Natural killer cell (primary cell): ENCODE measurements at regions of chr3 and their contacts with region 1.

Region 1: DNA sequence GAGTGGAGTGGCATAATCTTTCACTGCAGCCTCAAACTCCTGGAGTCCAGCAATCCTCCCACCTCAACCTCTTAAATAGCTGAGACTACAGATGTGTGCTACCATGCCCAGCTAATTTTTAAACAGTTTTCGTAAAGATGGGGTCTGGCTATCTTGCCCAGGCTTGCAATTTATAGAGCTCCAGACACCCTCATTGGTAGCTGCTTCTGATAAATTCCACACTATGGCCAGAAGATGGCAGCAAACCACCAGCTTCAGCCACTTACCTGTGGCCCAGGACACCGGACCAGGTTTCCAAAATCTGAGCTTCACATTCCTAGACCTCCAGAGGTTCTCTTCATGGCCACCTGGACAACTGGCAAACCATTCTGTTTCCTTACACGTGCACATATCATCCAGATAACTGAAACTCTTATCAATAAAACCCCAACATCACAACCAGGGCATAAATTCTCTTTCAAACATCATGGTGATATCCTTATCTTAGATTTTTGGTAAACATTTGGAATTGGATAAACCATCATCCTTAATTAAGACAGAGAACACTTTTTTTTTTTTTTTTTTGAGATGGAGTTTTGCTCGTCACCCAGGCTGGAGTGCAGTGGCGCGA is 28.9 kb downstream of the FBXW12 start:
- DNase-seq: peak; percentile 53 to 91
- ATAC-seq: peak; percentile 74 to 94 (median 93)
- H3K4me3 ChIP-seq: no peak overlapping the region
- H3K4me3 Mint-ChIP-seq: no peak overlapping the region
- H3K27ac ChIP-seq: no peak overlapping the region
- H3K27ac Mint-ChIP-seq: no peak overlapping the region
- H3K4me1 ChIP-seq: no peaks in the 10 kb centered on the region
- H3K4me1 Mint-ChIP-seq: no peaks in the 10 kb centered on the region
- H3K27me3 ChIP-seq: no peaks in the 10 kb centered on the region
- H3K27me3 Mint-ChIP-seq: peaks cover 5 to 6% of the 10 kb centered on the region in 2 donors
- CTCF ChIP-seq: peak; percentile 89

Region 2: DNA sequence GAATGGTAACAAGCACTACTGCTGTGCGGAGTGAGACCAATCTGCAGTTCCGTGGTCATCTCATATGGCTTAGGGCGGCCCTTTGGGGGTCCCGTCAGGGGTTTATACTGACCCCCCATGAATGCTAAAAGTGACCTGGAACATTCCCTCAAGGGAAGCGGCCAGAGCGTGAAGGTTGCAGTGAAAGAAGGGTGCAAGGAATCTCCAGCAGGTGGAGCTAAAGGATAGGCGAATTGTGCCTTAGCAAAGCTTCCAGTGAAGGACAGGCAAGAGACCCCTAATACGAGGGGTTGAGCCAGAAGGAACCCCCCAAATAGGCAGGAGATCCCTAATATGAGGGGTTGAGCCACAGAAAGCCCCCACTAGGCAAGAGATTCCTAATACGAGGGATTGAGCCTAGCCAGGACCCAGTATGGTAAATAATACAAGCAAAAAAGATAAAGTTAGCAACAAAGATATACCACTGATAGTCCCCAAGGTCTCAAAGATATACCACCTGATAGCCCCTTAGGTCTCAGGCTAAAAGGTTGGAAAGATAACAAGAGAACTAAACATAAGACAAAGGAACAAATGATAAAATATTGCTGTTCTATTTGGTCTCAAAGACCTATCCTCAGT is 127.2 kb before region 1 on chr3:
- intact Hi-C with region 1: loop called (anchors 1 kb)
- DNase-seq: peak; percentile 30 to 82
- ATAC-seq: peak; percentile 68 to 78 (median 70)
- H3K4me3 ChIP-seq: no peak overlapping the region
- H3K4me3 Mint-ChIP-seq: no peak overlapping the region
- H3K27ac ChIP-seq: no peak overlapping the region
- H3K27ac Mint-ChIP-seq: no peak overlapping the region
- H3K4me1 ChIP-seq: no peaks in the 10 kb centered on the region
- H3K4me1 Mint-ChIP-seq: peaks cover 0 to 5% of the 10 kb centered on the region in 2 donors
- H3K27me3 ChIP-seq: no peaks in the 10 kb centered on the region
- H3K27me3 Mint-ChIP-seq: no peaks in the 10 kb centered on the region
- CTCF ChIP-seq: peak; percentile 74

Region 3: DNA sequence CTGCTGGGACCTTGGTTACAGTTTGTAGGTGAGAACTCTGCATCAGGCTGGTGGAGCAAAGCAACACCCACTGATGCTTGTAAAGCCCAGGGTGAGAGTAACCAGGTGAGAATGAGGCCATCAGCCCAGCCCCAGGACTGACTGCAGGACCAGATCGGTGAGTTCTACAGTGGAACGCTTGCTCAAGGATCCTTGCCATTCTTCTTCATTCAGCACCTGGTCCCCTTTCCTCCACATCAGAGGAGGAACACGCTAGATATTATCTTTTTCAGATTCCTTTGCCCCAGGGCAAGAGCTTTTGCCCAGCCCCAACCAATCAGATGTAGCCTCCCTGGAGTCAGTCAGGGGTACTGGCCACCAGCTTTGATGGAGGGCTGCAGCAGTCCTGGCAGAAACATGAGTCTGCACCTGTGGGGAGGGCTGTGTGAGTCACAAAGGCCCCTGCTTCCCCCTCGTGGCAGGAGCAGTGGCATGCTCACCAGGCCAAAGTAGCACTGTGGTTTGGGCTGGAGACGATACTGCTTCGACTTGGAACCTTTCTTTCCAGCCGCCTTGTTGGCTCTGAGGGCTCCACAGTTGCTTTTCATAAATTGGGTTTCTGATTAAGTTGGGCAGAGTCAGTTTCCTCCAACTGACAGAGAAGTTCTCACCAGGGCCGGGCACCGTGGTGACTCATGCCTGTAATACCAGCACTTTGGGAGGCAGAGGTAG is 106.6 kb after region 1 on chr3:
- intact Hi-C with region 1: loop called (anchors 1 kb)
- DNase-seq: peak; percentile 56 to 88
- ATAC-seq: peak; percentile 82 to 85 (median 84)
- H3K4me3 ChIP-seq: no peak overlapping the region
- H3K4me3 Mint-ChIP-seq: peak overlapping the region; percentile 35
- H3K27ac ChIP-seq: no peak overlapping the region
- H3K27ac Mint-ChIP-seq: peak overlapping the region in 1 of 2 donors; percentile 57
- H3K4me1 ChIP-seq: peaks cover 31% of the 10 kb centered on the region
- H3K4me1 Mint-ChIP-seq: peaks cover 8 to 23% of the 10 kb centered on the region in 2 donors
- H3K27me3 ChIP-seq: no peaks in the 10 kb centered on the region
- H3K27me3 Mint-ChIP-seq: no peaks in the 10 kb centered on the region
- CTCF ChIP-seq: peak; percentile 50

Region 4: DNA sequence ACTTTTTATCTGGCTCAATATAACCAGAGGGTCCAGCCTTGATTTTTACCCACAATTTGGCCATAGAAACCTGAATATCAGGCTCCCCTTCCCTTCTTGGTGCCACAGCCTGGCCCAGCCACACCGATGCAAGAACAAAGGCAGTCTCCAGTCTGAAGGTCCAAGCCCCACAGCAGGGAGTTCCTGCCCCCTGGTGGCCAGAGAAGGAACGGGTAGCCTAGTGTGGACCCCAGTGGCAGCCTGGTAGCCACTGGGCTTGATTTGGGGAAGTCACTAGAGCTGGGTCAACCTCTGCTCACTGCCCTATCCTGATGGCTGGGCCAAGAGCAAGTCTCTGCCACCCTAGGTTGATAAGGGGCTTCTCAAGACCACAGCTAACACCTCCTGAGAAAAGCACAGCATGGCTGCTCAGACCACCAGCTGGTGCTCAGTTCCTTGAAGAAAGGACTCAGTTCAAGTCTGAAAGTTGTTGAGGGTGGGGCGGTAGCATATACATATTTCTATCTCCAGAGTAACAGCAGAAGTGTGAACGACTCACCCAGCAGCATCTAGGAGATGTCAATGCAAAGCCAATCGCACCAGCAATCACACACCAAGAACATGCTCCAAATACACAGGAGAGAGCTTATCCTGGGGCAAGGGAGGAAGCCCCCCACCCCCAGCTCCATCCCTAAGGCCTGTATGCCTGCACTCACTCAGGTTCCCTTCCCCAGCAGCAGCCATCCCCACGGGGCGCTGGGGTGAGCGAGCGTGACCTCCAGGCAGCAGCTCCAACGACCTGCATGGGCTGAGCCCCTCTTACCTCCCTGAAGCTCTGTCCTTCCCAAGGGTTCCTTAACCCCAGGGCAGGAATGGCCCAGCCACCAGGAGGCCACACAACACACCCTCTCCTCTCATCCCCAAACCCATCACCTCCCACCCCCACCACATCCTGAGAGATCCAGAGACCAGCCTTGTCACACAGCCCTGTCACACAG is 148.1 kb after region 1 on chr3:
- intact Hi-C with region 1: loop called (anchors 1 kb)
- DNase-seq: peak; percentile 80 to 89
- ATAC-seq: peak; percentile 92 to 100 (median 99)
- H3K4me3 ChIP-seq: no peak overlapping the region
- H3K4me3 Mint-ChIP-seq: no peak overlapping the region
- H3K27ac ChIP-seq: no peak overlapping the region
- H3K27ac Mint-ChIP-seq: no peak overlapping the region
- H3K4me1 ChIP-seq: peaks cover 8% of the 10 kb centered on the region
- H3K4me1 Mint-ChIP-seq: no peaks in the 10 kb centered on the region
- H3K27me3 ChIP-seq: no peaks in the 10 kb centered on the region
- H3K27me3 Mint-ChIP-seq: no peaks in the 10 kb centered on the region
- CTCF ChIP-seq: peak; percentile 89

Region 5: GRCh38 chr3:48609088-48610005 is 208.4 kb after region 1 on chr3 and contains the start of gene UQCRC1:
- intact Hi-C with region 1: loop called (anchors 2 kb)
- DNase-seq: peak; percentile 93 to 97
- ATAC-seq: peak; percentile 98 to 100 (median 99)
- H3K4me3 ChIP-seq: peak within 1 kb of the TSS; percentile 99
- H3K4me3 Mint-ChIP-seq: peak within 1 kb of the TSS; percentile 99
- H3K27ac ChIP-seq: peak within 1 kb of the TSS; percentile 81
- H3K27ac Mint-ChIP-seq: peak within 1 kb of the TSS; percentile 90 to 98
- H3K4me1 ChIP-seq: peaks cover 14% of the 10 kb centered on the region
- H3K4me1 Mint-ChIP-seq: peaks cover 6 to 21% of the 10 kb centered on the region in 2 donors
- H3K27me3 ChIP-seq: no peaks in the 10 kb centered on the region
- H3K27me3 Mint-ChIP-seq: no peaks in the 10 kb centered on the region
- CTCF ChIP-seq: peak; percentile 76
- total RNA-seq, gene UQCRC1: 117 to 139 (median 124) TPM

Region 6: DNA sequence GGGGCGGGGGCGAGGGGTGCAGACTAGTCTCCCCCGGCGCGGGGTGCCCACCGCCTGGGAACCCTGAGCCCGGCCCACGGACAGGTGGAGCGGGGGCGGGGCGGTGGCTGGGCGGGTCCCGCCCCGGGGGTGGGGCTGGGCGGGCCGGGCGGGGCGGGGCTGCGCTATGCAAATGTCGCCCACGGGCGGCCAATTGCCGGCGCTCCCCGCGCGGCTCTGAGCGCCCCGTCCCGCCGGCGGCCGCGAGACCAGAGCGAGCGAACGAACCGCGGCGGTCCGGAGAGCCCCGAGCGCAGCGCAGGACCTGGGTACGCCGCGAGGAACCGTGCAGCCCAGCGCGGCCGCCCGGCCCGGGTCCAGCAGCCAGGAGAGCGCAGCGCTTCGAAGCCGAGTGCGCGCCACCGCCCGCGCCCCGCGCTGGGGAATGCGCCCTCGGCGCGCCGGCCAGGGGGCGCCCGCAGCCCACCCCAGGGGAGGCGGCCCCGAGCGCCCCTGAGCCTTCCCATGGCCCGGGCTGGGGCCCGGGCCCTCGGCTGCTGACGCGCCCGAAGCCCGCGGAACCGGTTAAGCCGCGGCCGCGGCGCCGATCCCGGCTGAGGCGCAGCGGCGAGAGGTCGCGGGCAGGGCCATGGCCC is 1754.0 kb after region 1 on chr3 and contains the start of gene SEMA3F:
- intact Hi-C with region 1: no loop called
- DNase-seq: peak; percentile 61 to 87
- ATAC-seq: peak; percentile 91 to 93 (median 91)
- H3K4me3 ChIP-seq: no peak within 1 kb of the TSS
- H3K4me3 Mint-ChIP-seq: peak within 1 kb of the TSS; percentile 90
- H3K27ac ChIP-seq: no peak within 1 kb of the TSS
- H3K27ac Mint-ChIP-seq: no peak within 1 kb of the TSS
- H3K4me1 ChIP-seq: peaks cover 18% of the 10 kb centered on the region
- H3K4me1 Mint-ChIP-seq: peaks cover 6 to 29% of the 10 kb centered on the region in 2 donors
- H3K27me3 ChIP-seq: peaks cover 20% of the 10 kb centered on the region
- H3K27me3 Mint-ChIP-seq: peaks cover 23 to 37% of the 10 kb centered on the region in 2 donors
- CTCF ChIP-seq: no peak
- total RNA-seq, gene SEMA3F: 0.16 to 1.1 (median 0.78) TPM